Endothelial cell of umbilical vein (primary cell): ENCODE measurements at regions of chr2 and their contacts with region 1.

Region 1: DNA sequence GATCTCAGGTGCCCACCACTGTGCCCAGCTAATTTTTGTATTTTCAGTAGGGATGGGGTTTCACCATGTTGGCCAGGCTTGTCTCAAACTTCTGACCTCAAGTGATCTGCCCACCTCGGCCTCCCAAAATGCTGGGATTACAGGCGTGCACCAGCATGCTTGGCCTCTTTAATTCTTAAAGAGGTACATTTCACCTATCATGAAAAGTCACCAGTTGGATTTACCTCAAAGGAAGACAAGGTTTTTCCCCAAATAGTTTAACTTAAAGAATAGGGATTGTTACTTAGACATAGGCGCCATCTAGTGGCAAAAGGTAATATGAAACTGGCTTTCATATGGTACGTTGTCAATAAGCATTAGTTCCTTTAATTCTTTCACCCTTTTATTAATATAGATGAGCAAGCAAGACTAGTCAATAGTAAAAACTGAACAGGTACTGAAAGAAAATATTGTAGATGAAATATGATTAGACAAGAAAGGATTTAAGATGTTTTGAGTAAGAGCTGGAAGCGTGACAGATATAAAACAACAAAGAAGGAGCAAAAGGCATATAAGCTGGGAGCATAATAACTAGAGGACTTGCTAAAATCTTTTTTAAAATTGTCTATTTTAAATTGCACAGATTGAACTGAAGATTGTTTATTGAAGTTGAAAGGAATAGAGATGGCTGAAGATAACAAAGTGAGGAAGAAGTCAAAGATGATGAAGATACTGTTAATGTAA is 35.0 kb upstream of the PSMD14 start:
- DNase-seq: peak; percentile 72
- H3K4me3 ChIP-seq: no peak overlapping the region
- H3K27ac ChIP-seq: no peak overlapping the region
- H3K4me1 ChIP-seq: no peaks in the 10 kb centered on the region
- H3K27me3 ChIP-seq: no peaks in the 10 kb centered on the region
- CTCF ChIP-seq: peak; percentile 44 to 56
- POLR2A ChIP-seq: no peak

Region 2: DNA sequence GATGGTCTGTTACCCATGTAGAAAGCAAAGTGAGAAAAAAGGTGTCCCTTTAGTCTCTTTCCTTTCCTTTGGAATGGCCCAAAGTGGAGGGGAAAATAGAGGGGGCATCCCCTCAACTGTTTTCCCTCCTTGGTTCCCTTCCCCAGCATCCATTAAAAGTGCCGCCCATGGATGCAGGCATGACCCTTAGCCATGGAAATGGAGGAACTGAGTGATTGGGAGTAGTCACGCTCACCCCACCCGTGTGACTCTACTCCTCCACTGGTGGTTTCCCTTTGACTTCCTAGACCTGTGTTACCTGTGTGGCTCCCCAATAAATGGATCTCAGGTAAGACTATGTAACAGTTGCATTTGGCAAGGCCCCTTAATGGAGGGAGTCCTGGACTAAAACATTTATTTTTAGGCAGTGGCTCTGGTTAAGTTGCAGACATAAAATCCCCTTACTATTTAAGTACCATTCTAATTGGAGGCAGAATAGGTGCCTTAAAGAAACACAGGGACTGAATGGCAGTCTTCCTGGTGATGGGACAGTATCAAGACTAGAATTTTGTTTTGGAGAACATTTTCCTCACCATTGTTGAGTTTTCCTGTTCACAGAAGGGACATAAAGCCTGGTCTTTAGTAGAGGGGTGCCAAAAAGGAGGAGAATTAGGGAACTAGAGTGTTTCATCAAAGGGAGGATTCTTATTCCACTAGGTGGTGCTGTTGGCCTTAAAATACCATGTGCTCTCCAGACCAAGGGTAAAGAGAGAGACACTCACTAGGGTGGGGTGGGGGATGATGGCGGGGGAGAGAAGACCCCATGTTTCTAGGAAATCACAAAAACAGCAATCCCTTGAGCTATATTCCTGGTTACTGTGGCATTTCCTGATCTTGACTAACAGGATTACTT is 1185.1 kb before region 1 on chr2:
- CTCF ChIA-PET with region 1: no interaction called
- POLR2A ChIA-PET with region 1: no interaction called
- dilution Hi-C with region 1: no loop called
- intact Hi-C with region 1: loop called (anchors 5 kb)
- DNase-seq: no peak
- H3K4me3 ChIP-seq: no peak overlapping the region
- H3K27ac ChIP-seq: no peak overlapping the region
- H3K4me1 ChIP-seq: no peaks in the 10 kb centered on the region
- H3K27me3 ChIP-seq: no peaks in the 10 kb centered on the region
- CTCF ChIP-seq: peak; percentile 4 to 21
- POLR2A ChIP-seq: no peak

Region 3: GRCh38 chr2:161223139-161223732 is 50.0 kb before region 1 on chr2:
- CTCF ChIA-PET with region 1: interaction called, 52 read pairs
- POLR2A ChIA-PET with region 1: no interaction called
- dilution Hi-C with region 1: no loop called
- intact Hi-C with region 1: loop called (anchors 1 kb)
- DNase-seq: peak; percentile 77
- H3K4me3 ChIP-seq: no peak overlapping the region
- H3K27ac ChIP-seq: no peak overlapping the region
- H3K4me1 ChIP-seq: no peaks in the 10 kb centered on the region
- H3K27me3 ChIP-seq: no peaks in the 10 kb centered on the region
- CTCF ChIP-seq: peak; percentile 24 to 26
- POLR2A ChIP-seq: no peak

Region 4: DNA sequence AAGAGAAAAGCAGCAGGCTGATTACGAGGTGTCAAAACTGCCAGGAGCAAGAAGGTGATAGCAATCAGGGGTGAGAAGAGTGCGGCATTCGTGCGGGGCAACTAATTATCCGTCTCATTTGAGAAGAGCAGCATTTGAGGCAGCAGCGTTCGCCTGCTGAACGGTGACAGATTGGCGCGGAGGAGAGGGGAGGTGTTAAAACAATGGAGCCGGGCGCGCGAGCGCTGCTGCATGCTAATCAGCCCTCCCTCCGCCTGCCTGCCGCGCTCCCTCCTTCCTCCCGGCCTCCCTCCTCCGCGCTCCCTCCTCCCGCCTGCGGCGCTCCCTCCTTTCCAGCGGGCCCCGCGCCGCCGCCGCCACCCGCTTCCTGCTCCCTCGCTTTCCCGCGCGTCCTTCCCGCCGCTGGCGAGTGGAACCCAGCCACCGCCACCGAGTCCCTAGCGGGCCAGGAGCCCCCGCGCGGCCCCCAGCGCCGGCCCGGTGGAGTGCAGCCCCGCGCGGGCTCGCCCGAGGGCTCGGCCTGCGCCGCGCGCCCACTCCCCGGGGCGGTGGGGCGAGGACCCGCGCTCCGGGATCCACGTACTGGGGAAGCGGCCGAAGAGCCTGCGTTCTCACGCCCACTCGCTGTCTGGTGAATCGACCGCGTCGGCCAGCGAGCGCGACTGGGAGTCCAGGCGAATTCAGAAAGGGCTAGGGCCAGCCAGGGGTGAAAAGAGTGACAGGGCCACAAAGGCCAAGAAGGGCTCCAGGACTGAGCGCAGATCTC is 34.5 kb before region 1 on chr2:
- CTCF ChIA-PET with region 1: interaction called, 5 read pairs
- POLR2A ChIA-PET with region 1: no interaction called
- dilution Hi-C with region 1: no loop called
- intact Hi-C with region 1: loop called (anchors 1 kb)
- DNase-seq: peak; percentile 68
- H3K4me3 ChIP-seq: peak overlapping the region; percentile 20 to 59 (median 49)
- H3K27ac ChIP-seq: no peak overlapping the region
- H3K4me1 ChIP-seq: peaks cover 12% of the 10 kb centered on the region
- H3K27me3 ChIP-seq: no peaks in the 10 kb centered on the region
- CTCF ChIP-seq: no peak
- POLR2A ChIP-seq: no peak

Region 5: GRCh38 chr2:161533218-161533617 is 260.0 kb after region 1 on chr2:
- CTCF ChIA-PET with region 1: no interaction called
- POLR2A ChIA-PET with region 1: no interaction called
- dilution Hi-C with region 1: no loop called
- intact Hi-C with region 1: no loop called
- DNase-seq: no peak
- H3K4me3 ChIP-seq: no peak overlapping the region
- H3K27ac ChIP-seq: no peak overlapping the region
- H3K4me1 ChIP-seq: no peaks in the 10 kb centered on the region
- H3K27me3 ChIP-seq: no peaks in the 10 kb centered on the region
- CTCF ChIP-seq: no peak
- POLR2A ChIP-seq: no peak